ENCODE measurements at regions of chr7 and their contacts with region 1.

Region 1: DNA sequence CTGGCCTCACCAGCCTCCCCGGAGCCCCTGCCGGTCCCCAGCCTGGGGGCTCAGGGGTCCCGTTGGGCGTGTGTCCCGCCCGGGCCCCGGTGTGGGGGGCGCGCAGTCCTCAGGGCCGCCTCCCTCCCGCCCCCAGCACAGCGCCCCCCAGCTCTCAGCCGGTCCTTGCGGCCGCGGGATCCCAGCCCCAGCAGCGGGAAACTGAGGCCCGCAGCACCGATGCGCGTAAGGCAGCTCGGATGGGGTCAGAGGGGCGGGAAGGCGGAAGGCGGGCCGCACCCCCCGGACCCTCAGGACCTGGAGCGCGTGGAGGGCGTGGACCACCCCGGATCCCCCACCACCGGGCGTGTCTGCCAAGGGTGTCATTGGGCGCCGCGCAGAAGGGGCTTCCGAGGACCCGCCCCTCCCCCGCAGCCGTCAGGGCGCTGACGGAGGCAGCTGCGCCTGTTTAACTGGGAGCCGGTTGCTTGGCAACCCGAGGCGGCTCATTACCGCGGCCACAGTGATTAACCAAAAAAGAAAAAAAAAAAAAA is 14.9 kb downstream of the UNCX start:
- DNase-seq: peak; percentile 57
- H3K4me3 Mint-ChIP-seq: no peak overlapping the region
- H3K27ac Mint-ChIP-seq: no peak overlapping the region
- H3K4me1 Mint-ChIP-seq: peaks cover 2% of the 10 kb centered on the region
- H3K27me3 Mint-ChIP-seq: peaks cover 57% of the 10 kb centered on the region

Region 2: DNA sequence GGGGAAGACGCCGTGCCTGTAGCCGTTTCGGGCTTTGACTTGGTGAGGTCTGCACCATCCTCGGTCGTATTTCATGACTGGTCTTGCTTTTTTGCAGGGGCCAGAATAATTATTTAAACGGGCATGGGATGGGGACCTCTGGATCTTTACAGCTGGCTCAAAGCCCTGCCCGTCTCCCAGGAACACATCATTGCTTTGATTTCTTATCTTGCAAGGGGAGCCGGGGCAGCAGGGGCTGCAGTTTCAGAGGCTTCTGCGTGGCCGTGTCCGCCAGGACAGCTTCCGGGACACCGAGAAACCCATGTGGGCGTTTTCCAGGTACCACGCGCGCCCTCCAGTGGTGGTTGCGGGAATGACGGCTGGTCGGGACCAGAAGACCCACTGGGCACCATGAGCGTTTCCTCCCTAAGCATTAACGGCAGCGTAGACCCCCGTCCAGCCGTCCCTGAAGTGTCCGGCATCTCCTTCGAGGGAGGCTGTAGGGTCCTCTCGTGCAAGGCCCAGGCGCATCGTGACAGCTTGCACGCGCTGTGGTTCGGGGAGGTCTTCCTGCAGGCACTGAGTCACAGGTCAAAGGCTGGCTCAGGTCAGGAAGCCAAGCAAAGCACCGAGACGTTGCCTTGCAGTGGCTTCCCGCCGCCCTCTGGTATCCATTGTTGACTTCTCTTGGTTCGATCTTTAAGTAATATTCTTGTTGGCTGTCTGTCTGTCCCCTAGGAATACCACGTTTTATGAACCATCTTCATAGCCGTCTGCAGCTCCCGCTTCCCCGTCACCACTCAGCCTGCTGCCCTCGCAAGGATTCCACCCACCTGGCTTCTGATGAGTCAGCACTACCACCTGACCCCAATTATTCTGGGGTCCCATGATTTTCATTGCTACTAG is 71.4 kb before region 1 on chr7:
- intact Hi-C with region 1: no loop called
- DNase-seq: peak; percentile 95
- H3K4me3 Mint-ChIP-seq: peak overlapping the region; percentile 48
- H3K27ac Mint-ChIP-seq: peak overlapping the region; percentile 60
- H3K4me1 Mint-ChIP-seq: peaks cover 10% of the 10 kb centered on the region
- H3K27me3 Mint-ChIP-seq: peaks cover 3% of the 10 kb centered on the region

Region 3: GRCh38 chr7:1210321-1210978 is 37.1 kb before region 1 on chr7:
- intact Hi-C with region 1: no loop called
- DNase-seq: no peak
- H3K4me3 Mint-ChIP-seq: no peak overlapping the region
- H3K27ac Mint-ChIP-seq: no peak overlapping the region
- H3K4me1 Mint-ChIP-seq: no peaks in the 10 kb centered on the region
- H3K27me3 Mint-ChIP-seq: peaks cover 25% of the 10 kb centered on the region

Region 4: GRCh38 chr7:1225441-1226185 is 22.0 kb before region 1 on chr7:
- intact Hi-C with region 1: loop called (anchors 2 kb)
- DNase-seq: peak; percentile 76
- H3K4me3 Mint-ChIP-seq: no peak overlapping the region
- H3K27ac Mint-ChIP-seq: peak overlapping the region; percentile 51
- H3K4me1 Mint-ChIP-seq: peaks cover 2% of the 10 kb centered on the region
- H3K27me3 Mint-ChIP-seq: peaks cover 56% of the 10 kb centered on the region

Region 5: DNA sequence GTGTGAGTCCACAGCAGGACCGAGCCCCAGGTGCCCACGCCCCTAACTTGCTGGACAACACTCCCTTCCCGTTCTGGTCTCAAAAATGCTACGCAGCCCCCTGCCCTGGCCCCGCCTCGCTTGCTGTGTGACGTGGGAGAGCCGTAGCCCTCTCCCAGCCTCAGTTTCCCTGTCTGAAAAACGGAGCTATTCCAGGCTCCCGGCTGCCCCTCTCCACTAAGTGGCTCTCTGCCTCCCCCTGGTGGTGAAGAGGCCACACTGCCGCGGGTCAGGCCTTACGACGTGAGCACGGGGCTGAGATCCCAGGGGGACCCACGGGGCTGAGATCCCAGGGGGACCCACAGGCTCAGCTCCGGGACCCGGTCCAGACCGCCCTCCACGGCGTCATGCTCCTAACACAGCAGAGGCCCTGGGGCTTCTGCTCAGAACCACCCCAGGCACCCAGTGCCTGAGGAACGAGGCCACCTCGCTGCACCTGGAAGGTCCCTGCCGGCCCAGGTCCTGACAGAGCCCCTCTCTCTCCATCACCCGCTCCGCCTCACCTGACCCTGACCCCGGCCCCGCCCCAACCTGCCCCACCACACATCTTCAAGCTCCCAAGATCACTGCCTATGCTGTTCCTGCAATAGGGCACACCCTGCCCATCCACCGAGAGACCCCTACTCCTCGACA is 185.0 kb after region 1 on chr7:
- intact Hi-C with region 1: loop called (anchors 5 kb)
- DNase-seq: peak; percentile 94
- H3K4me3 Mint-ChIP-seq: no peak overlapping the region
- H3K27ac Mint-ChIP-seq: no peak overlapping the region
- H3K4me1 Mint-ChIP-seq: peaks cover 2% of the 10 kb centered on the region
- H3K27me3 Mint-ChIP-seq: peaks cover 2% of the 10 kb centered on the region

Region 6: DNA sequence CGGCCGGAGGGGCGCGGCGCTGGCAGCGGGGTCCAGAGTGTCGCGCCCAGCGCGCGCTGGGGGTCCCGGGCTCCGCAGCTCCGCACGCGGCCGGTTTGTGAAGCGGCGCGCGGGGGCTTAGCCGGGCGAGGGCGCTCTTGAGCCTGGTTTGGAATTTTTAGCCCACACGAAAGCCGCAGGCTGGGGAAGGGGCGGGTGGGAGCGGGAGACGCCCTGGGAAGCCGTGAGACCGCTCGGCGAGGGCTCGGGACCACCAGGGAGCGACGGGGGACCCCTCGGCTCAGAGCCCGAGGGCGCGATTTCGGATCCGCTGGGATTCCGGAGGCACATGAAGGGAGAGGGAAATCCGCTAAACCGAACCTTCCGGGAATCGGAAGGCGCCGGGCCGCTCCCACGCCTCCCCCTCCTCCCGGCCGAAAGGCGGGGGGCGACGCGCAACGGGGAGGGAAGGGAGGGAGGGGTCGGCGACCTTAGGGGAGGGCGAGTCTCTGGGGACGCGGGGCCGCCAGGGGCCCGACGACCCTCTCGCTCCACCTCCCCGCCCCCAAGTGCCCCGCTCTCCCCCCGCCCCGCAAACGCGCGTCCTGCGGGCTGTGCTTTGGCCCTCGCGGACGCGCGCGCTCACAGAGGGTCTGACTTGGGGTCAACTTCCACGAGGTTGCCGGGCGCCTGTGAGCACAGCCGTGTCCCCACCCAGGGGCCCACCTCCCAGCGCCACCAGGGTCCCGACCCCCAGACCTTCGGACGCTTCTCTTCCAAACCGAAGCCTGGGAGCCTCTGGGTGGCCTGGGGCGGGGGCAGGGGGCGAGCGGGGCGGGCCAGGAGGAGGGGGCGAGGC is 417.3 kb after region 1 on chr7:
- intact Hi-C with region 1: loop called (anchors 10 kb)
- DNase-seq: peak; percentile 85
- H3K4me3 Mint-ChIP-seq: no peak overlapping the region
- H3K27ac Mint-ChIP-seq: no peak overlapping the region
- H3K4me1 Mint-ChIP-seq: peaks cover 8% of the 10 kb centered on the region
- H3K27me3 Mint-ChIP-seq: peaks cover 44% of the 10 kb centered on the region